ENCODE measurements at regions of chr10 and their contacts with region 1.

Region 1: GRCh38 chr10:114043532-114044246 is at the start of gene ADRB1:
- DNase-seq: peak; percentile 76
- ATAC-seq: peak; percentile 61
- H3K4me3 Mint-ChIP-seq: peak within 1 kb of the TSS; percentile 70
- H3K27ac Mint-ChIP-seq: peak within 1 kb of the TSS; percentile 72
- H3K4me1 Mint-ChIP-seq: peaks cover 33% of the 10 kb centered on the region
- H3K27me3 Mint-ChIP-seq: peaks cover 79% of the 10 kb centered on the region
- total RNA-seq, gene ADRB1: 2.3 to 2.8 TPM

Region 2: GRCh38 chr10:114031073-114031972 is 12.4 kb before region 1 on chr10:
- CTCF ChIA-PET with region 1: interaction called, 10 read pairs
- DNase-seq: no peak
- ATAC-seq: no peak
- H3K4me3 Mint-ChIP-seq: no peak overlapping the region
- H3K27ac Mint-ChIP-seq: no peak overlapping the region
- H3K4me1 Mint-ChIP-seq: peaks cover 11% of the 10 kb centered on the region
- H3K27me3 Mint-ChIP-seq: peaks cover 69% of the 10 kb centered on the region

Region 3: GRCh38 chr10:114060456-114060855 is 16.8 kb after region 1 on chr10:
- CTCF ChIA-PET with region 1: interaction called, 10 read pairs
- DNase-seq: no peak
- ATAC-seq: peak; percentile 36
- H3K4me3 Mint-ChIP-seq: no peak overlapping the region
- H3K27ac Mint-ChIP-seq: no peak overlapping the region
- H3K4me1 Mint-ChIP-seq: peaks cover 31% of the 10 kb centered on the region
- H3K27me3 Mint-ChIP-seq: peaks cover 22% of the 10 kb centered on the region

Measured in activated CD8-positive, alpha-beta memory T cell treated with anti-CD3 and anti-CD28 coated beads, Interleukin-2, amount 10 ng/mL, durations not matched to agents 7 days and 5 days (primary cell).